T-cell (primary cell): ENCODE measurements at regions of chr2 and their contacts with region 1.

Region 1: GRCh38 chr2:17035010-17035409 is 369.4 kb upstream of the CYRIA start:
- DNase-seq: no peak
- ATAC-seq: no peak
- H3K4me3 ChIP-seq: no peak overlapping the region
- H3K4me3 Mint-ChIP-seq: no peak overlapping the region
- H3K27ac ChIP-seq: no peak overlapping the region
- H3K27ac Mint-ChIP-seq: no peak overlapping the region
- H3K4me1 ChIP-seq: no peaks in the 10 kb centered on the region
- H3K4me1 Mint-ChIP-seq: no peaks in the 10 kb centered on the region
- H3K27me3 ChIP-seq: no peaks in the 10 kb centered on the region
- H3K27me3 Mint-ChIP-seq: no peaks in the 10 kb centered on the region

Region 2: GRCh38 chr2:17068021-17068420 is 33.0 kb after region 1 on chr2:
- CTCF ChIA-PET with region 1: no interaction called
- POLR2A ChIA-PET with region 1: interaction called in 1 of 2 experiments, 10 read pairs
- DNase-seq: no peak
- ATAC-seq: no peak
- H3K4me3 ChIP-seq: no peak overlapping the region
- H3K4me3 Mint-ChIP-seq: no peak overlapping the region
- H3K27ac ChIP-seq: no peak overlapping the region
- H3K27ac Mint-ChIP-seq: no peak overlapping the region
- H3K4me1 ChIP-seq: no peaks in the 10 kb centered on the region
- H3K4me1 Mint-ChIP-seq: no peaks in the 10 kb centered on the region
- H3K27me3 ChIP-seq: no peaks in the 10 kb centered on the region
- H3K27me3 Mint-ChIP-seq: no peaks in the 10 kb centered on the region

Region 3: DNA sequence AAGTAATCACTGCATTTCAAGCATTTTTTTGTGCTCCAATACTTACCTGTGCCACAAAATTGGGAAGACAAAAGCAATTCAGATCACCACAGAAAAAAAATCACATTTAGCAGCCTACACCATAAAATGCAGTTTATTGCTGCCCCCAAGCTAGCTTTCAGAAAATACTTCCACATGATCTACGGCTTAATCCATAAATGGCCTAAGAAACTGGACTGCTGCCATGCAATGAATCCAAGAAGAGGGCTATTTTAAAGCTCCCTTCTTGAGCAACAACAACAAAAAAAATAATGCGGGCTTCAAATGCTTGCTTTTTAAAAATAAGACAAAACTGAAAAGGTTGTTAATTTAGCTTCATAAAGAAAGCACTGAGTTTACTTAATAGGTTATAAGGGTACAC is 210.9 kb after region 1 on chr2:
- CTCF ChIA-PET with region 1: no interaction called
- POLR2A ChIA-PET with region 1: no interaction called
- DNase-seq: no peak
- ATAC-seq: no peak
- H3K4me3 ChIP-seq: no peak overlapping the region
- H3K4me3 Mint-ChIP-seq: no peak overlapping the region
- H3K27ac ChIP-seq: no peak overlapping the region
- H3K27ac Mint-ChIP-seq: no peak overlapping the region
- H3K4me1 ChIP-seq: no peaks in the 10 kb centered on the region
- H3K4me1 Mint-ChIP-seq: no peaks in the 10 kb centered on the region
- H3K27me3 ChIP-seq: no peaks in the 10 kb centered on the region
- H3K27me3 Mint-ChIP-seq: no peaks in the 10 kb centered on the region